ENCODE measurements at regions of chrX and their contacts with region 1.

Region 1: GRCh38 chrX:40097497-40098263 is at the start of gene BCOR:
- DNase-seq: peak; percentile 71
- H3K4me3 Mint-ChIP-seq: peak within 1 kb of the TSS; percentile 90
- H3K27ac Mint-ChIP-seq: peak within 1 kb of the TSS; percentile 95
- H3K4me1 Mint-ChIP-seq: peaks cover 28% of the 10 kb centered on the region
- H3K27me3 Mint-ChIP-seq: no peaks in the 10 kb centered on the region
- total RNA-seq, gene BCOR: 74.6 and 82.2 TPM in 2 replicates

Region 2: DNA sequence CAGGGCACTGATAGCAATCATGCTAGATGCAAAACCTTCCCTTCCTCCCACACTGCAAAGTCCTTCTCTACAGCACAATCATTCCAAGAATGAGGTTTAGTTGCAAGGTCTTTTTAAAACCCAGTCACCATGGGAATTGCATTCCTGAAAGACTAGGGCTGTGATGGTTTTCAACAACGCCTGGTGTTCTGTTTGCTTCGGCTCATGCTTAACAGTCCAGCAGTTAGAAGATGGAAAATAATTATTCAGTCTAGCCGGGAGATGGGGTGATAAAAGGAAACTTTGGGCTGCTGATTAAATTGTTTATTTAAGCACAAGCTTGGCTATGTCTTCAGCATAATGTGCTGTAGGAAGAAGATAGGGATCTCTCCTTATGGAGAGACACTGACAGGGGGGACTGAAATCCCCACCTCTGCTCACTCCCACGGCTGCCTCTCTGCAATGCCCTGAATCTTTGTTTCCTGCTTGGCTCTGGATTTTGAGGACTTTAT is 1085.0 kb before region 1 on chrX:
- intact Hi-C with region 1: no loop called
- DNase-seq: no peak
- H3K4me3 Mint-ChIP-seq: no peak overlapping the region
- H3K27ac Mint-ChIP-seq: no peak overlapping the region
- H3K4me1 Mint-ChIP-seq: peaks cover 1% of the 10 kb centered on the region
- H3K27me3 Mint-ChIP-seq: no peaks in the 10 kb centered on the region

Region 3: GRCh38 chrX:39766085-39766726 is 331.5 kb before region 1 on chrX:
- intact Hi-C with region 1: loop called (anchors 2 kb)
- DNase-seq: peak; percentile 31
- H3K4me3 Mint-ChIP-seq: peak overlapping the region; percentile 52
- H3K27ac Mint-ChIP-seq: peak overlapping the region; percentile 95
- H3K4me1 Mint-ChIP-seq: peaks cover 39% of the 10 kb centered on the region
- H3K27me3 Mint-ChIP-seq: no peaks in the 10 kb centered on the region

Region 4: DNA sequence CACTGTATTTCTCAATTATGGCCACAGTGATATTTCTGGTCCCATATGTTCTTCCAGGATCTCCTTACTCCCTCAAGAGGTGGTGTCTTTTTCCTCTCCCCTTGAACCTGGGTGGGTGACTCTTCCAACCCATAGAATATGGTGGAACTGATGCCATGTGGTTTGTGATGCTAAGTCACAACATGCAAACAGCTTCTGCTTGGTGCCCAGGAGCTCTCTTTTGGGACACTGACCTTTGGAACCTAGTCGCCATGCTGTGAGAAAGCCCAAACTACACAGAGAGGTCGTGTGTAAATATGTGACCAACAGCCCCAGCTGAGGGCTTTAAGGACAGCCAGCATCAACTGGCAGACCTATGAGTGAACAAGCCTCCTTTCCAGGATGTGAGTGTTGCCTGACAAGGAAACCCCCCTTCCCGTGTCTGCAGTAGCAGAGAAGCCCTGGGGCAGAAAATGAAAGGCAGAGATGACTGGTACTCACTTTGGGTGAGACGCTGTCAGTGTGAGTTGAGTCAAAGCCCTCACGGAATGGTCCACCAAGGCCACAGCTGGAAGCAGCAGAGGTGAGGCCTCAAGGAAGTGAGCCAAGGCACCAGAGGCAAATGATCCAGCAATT is 223.4 kb before region 1 on chrX:
- intact Hi-C with region 1: loop called (anchors 5 kb)
- DNase-seq: peak; percentile 64
- H3K4me3 Mint-ChIP-seq: peak overlapping the region; percentile 7
- H3K27ac Mint-ChIP-seq: peak overlapping the region; percentile 89
- H3K4me1 Mint-ChIP-seq: peaks cover 31% of the 10 kb centered on the region
- H3K27me3 Mint-ChIP-seq: no peaks in the 10 kb centered on the region

Region 5: GRCh38 chrX:40153335-40154249 is 55.9 kb after region 1 on chrX:
- intact Hi-C with region 1: loop called (anchors 2 kb)
- DNase-seq: no peak
- H3K4me3 Mint-ChIP-seq: peak overlapping the region; percentile 80
- H3K27ac Mint-ChIP-seq: peak overlapping the region; percentile 69
- H3K4me1 Mint-ChIP-seq: peaks cover 18% of the 10 kb centered on the region
- H3K27me3 Mint-ChIP-seq: no peaks in the 10 kb centered on the region

Region 6: DNA sequence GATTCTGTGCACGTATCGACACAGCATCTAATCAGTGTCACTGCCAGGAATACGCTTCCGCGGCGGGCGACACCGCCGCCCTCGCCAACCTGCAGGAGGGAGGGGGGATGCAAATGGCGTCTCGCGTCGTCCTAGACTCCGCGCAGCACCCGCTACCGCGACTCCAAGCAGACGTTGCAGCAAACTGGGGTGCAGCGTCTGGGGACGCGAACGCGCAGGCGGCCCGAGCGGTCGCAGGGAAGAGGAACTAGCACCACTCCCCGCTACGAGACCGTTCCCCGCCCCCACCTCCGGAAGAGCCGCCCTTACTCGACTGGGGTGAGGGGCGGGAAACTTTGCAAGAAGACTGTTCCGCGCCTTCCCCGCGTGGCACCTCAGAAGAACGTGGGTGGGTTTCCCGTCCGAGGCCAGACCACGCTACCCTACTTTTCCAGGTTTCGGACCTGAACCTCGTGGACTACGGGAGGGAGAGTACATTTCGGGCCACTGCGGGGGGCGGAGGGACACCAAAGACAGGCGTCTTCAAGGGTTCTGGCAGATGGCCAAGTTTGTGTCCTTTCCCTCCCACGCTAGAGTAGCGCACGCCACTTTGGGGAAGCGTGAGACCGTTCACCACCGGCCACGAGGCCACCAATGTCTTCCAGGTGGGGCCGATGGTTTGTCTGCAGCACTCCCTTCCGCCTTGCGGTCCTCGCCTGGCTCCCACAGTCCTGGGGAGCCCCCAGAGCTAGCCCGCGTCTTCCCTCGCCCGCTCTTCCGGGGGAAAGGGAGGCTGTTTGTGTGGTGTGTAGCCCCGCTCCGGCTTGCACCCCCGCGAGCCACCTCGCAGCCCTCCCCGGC is 78.1 kb after region 1 on chrX:
- intact Hi-C with region 1: loop called (anchors 1 kb)
- DNase-seq: peak; percentile 73
- H3K4me3 Mint-ChIP-seq: peak overlapping the region; percentile 86
- H3K27ac Mint-ChIP-seq: peak overlapping the region; percentile 96
- H3K4me1 Mint-ChIP-seq: peaks cover 27% of the 10 kb centered on the region
- H3K27me3 Mint-ChIP-seq: no peaks in the 10 kb centered on the region

Region 7: GRCh38 chrX:40945361-40945713 is 847.7 kb after region 1 on chrX:
- intact Hi-C with region 1: no loop called
- DNase-seq: no peak
- H3K4me3 Mint-ChIP-seq: no peak overlapping the region
- H3K27ac Mint-ChIP-seq: no peak overlapping the region
- H3K4me1 Mint-ChIP-seq: peaks cover 3% of the 10 kb centered on the region
- H3K27me3 Mint-ChIP-seq: no peaks in the 10 kb centered on the region

Measured in activated T-helper 2 cell treated with anti-CD3 and anti-CD28 coated beads, Interferon-gamma antibody, Interleukin-2, Interleukin-4, amounts not matched to agents 10 μg/mL and 5 μg/mL and 100 μg/mL, durations not matched to agents 14 hours and 24 hours and 36 hours (primary cell).